ENCODE measurements at regions of chr6 and their contacts with region 1.

Region 1: DNA sequence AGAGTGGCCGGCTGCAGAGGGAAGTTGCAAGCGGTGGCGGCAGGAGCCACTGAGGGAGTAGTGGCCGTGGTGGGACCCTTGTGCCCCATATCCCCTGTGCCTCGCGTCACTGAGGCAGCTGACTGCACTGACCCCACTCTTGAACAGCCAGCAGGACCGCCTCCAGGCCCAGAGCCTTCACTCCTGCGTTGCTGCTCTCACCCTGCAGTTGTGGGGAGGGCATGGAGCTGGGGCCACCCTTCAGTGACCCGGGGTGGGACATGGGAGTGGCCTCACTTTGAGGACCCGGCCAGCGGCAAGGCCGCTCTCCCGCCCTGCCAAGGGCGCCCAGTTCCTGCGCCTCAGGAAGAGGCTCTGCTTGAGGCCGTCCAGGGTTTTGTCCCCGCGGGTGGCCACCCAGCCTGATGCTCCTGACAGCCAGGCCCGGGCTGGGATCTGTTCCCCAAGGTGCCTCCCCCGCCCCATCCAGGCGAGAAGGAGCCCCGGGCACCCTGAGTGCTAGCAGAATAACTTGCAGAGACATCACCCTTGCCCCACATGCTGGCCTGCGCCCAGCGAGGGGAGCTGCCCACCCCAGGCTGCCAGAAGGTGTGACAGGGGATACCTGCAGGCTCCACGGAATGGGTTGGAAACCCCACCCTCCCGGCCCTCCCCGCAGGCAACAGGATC is 44.4 kb downstream of the HLA-DRA start:
- DNase-seq: no peak
- H3K4me3 ChIP-seq: no peak overlapping the region
- H3K27ac ChIP-seq: no peak overlapping the region
- H3K4me1 ChIP-seq: no peaks in the 10 kb centered on the region
- H3K27me3 ChIP-seq: peaks cover 16% of the 10 kb centered on the region
- CTCF ChIP-seq: no peak

Region 2: GRCh38 chr6:32127717-32128592 is 356.1 kb before region 1 on chr6 and contains the start of gene ATF6B:
- CTCF ChIA-PET with region 1: no interaction called
- POLR2A ChIA-PET with region 1: no interaction called
- intact Hi-C with region 1: no loop called
- DNase-seq: peak; percentile 100
- H3K4me3 ChIP-seq: peak within 1 kb of the TSS; percentile 89
- H3K27ac ChIP-seq: peak within 1 kb of the TSS; percentile 97
- H3K4me1 ChIP-seq: peaks cover 21% of the 10 kb centered on the region
- H3K27me3 ChIP-seq: no peaks in the 10 kb centered on the region
- CTCF ChIP-seq: no peak
- total RNA-seq, gene ATF6B: 70.2 and 74.7 TPM in 2 replicates

Region 3: GRCh38 chr6:32539839-32540238 is 55.7 kb after region 1 on chr6:
- CTCF ChIA-PET with region 1: no interaction called
- POLR2A ChIA-PET with region 1: no interaction called
- intact Hi-C with region 1: loop called (anchors 2 kb)
- DNase-seq: no peak
- H3K4me3 ChIP-seq: no peak overlapping the region
- H3K27ac ChIP-seq: no peak overlapping the region
- H3K4me1 ChIP-seq: no peaks in the 10 kb centered on the region
- H3K27me3 ChIP-seq: no peaks in the 10 kb centered on the region
- CTCF ChIP-seq: no peak

Region 4: GRCh38 chr6:32589598-32590449 is 105.7 kb after region 1 on chr6 and contains the start of gene HLA-DRB1:
- CTCF ChIA-PET with region 1: no interaction called
- POLR2A ChIA-PET with region 1: no interaction called
- intact Hi-C with region 1: loop called (anchors 10 kb)
- DNase-seq: peak; percentile 5
- H3K4me3 ChIP-seq: no peak within 1 kb of the TSS
- H3K27ac ChIP-seq: no peak within 1 kb of the TSS
- H3K4me1 ChIP-seq: no peaks in the 10 kb centered on the region
- H3K27me3 ChIP-seq: peaks cover 7% of the 10 kb centered on the region
- CTCF ChIP-seq: no peak
- total RNA-seq, gene HLA-DRB1: not detected in 2 replicates